ENCODE measurements at regions of chr19 and their contacts with region 1.

Region 1: GRCh38 chr19:49727217-49728030 is 35.7 kb downstream of the TSKS start:
- DNase-seq: peak; percentile 55
- ATAC-seq: peak; percentile 50
- H3K4me3 ChIP-seq: no peak overlapping the region
- H3K27ac ChIP-seq: no peak overlapping the region
- H3K4me1 ChIP-seq: peaks cover 4% of the 10 kb centered on the region; the same call in 1 of the 2 replicates
- H3K27me3 ChIP-seq: no peaks in the 10 kb centered on the region
- CTCF ChIP-seq: no peak
- POLR2A ChIP-seq: no peak
- RAD21 ChIP-seq: no peak

Region 2: DNA sequence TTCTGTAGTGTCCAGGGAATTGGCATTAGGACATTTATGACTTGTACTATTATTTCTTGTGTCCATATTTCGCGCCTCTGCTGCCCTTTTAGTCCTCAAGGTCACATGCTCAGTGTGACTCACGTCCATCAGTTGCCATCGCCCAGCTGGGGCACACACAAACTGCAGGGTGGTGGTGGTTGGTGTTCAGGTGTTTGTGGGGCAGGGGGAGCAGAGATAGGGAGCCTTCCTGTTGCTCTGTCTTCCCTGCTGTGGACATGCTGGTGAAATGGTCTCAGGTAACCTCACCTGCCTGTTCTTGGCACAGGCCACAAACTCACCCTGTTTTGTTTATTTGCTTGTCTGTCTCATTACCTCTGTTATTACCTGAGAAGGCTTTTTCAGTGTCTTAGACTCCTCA is 114.0 kb before region 1 on chr19:
- CTCF ChIA-PET with region 1: no interaction called
- POLR2A ChIA-PET with region 1: no interaction called
- dilution Hi-C with region 1: no loop called
- in situ Hi-C with region 1: no loop called
- intact Hi-C with region 1: no loop called
- DNase-seq: no peak
- ATAC-seq: no peak
- H3K4me3 ChIP-seq: no peak overlapping the region
- H3K27ac ChIP-seq: no peak overlapping the region
- H3K4me1 ChIP-seq: peaks cover 16% of the 10 kb centered on the region
- H3K27me3 ChIP-seq: no peaks in the 10 kb centered on the region
- CTCF ChIP-seq: no peak
- POLR2A ChIP-seq: no peak
- RAD21 ChIP-seq: no peak

Region 3: DNA sequence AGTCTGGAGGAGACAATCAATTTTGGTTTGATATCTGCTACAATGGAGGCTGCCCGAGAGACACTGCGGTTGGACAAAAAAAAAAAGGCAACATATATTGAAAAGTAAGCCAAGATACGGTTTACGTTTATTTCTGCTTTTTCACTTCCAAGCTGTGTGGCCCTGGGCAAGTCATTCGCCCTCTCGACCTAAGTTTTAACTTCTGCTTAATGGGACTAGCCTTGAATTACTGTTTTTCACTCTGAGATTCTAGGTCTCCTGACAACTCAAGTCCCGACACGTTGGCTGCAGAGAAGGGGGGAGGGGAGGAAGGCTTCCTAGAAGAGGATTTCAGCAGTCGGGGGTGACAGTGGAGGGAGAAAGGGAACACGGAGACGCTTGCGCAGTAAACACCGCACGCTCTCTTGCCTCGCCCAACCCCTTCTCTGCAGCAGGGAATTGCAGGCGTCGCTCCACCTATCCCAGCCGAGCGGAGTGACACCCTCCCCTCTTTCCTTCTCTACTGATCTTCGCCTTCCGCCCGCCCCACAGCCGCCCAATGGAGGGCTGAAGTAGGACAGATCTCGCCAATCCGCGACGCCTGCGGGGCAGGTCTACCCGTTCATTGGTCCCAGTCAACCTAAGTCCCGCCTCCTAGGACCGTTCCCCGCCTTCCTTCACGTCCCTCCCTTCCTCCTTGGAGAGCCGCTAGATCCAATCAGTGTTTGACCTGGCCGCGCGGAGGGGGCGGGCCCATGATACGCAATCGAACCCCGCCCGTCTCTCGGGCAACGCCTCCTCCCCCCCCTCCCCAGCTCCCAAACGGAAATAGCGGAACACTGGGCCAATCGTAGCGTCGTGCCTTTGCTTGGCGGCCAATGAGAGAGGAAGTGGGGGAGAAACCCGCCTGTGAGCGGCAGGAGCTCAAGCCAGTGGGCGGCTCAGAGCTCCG is 38.8 kb after region 1 on chr19:
- CTCF ChIA-PET with region 1: no interaction called
- POLR2A ChIA-PET with region 1: no interaction called
- dilution Hi-C with region 1: no loop called
- in situ Hi-C with region 1: no loop called
- intact Hi-C with region 1: loop called (anchors 5 kb)
- DNase-seq: peak; percentile 100
- ATAC-seq: peak; percentile 91
- H3K4me3 ChIP-seq: peak overlapping the region; percentile 31; the same call in 1 of the 2 replicates
- H3K27ac ChIP-seq: peak overlapping the region; percentile 89
- H3K4me1 ChIP-seq: peaks cover 11% of the 10 kb centered on the region
- H3K27me3 ChIP-seq: no peaks in the 10 kb centered on the region
- CTCF ChIP-seq: no peak
- POLR2A ChIP-seq: peak; percentile 38; the same call in 1 of the 2 replicates
- RAD21 ChIP-seq: 0 out of 2 replicates have a peak, but pooled peaks have one; percentile 9

Measured in IMR-90 (cell line).